ENCODE measurements at regions of chr17 and their contacts with region 1.

Region 1: DNA sequence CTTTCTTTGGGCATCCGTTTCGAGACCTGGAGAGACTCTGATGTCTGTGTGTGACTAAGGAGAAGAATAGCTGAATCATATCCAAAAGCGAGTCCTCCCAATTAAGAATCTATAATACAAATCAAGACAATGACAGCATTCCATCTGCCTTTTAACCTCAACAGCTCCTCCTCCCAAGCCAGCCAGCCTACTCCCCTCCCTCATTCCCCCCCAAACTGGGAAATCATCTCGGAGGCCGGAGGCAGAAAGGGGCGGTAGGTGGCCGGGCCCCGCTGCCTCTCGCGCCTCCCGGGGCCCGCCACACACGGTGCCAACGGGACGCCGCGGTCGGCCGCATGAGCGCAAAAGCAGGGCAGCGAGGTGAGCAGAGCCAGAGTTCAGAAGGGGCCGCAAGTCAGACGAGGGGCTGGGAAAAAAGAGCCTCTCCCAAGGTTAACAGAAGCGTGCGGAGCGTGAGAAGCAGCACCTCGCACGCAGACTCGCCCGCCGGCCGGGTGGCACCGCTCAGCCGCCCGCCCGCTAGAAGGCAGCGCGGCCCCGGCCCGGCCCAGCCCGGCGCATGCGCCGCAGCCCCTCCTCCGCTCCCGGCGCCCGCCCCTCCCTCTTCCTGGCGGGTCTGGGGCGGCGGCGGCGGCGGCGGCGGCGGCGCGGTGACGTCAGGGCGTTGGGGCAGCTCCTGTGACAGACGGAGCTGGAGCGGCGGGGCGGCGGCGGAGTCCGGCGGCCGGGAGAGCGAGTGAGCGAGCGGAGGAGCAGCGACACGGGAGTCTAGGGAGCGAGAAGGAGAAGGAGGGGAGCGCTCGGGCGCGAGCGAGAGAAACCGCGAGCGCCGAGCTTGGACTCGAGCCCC is at the start of gene PAFAH1B1:
- DNase-seq: peak; percentile 84 to 91
- ATAC-seq: peak; percentile 83 to 86
- H3K4me3 ChIP-seq: peak within 1 kb of the TSS; percentile 91 to 99 (median 97)
- H3K27ac ChIP-seq: peak within 1 kb of the TSS; percentile 97 to 100 (median 98)
- H3K4me1 ChIP-seq: peaks cover 26 to 36% of the 10 kb centered on the region in 2 donors
- H3K27me3 ChIP-seq: no peaks in the 10 kb centered on the region
- CTCF ChIP-seq: peak in 3 of 5 experiments; percentile 30 to 49 (median 46)
- POLR2A ChIP-seq: peak; percentile 95 to 96
- total RNA-seq, gene PAFAH1B1: 99.2 to 106 (median 105) TPM

Region 2: DNA sequence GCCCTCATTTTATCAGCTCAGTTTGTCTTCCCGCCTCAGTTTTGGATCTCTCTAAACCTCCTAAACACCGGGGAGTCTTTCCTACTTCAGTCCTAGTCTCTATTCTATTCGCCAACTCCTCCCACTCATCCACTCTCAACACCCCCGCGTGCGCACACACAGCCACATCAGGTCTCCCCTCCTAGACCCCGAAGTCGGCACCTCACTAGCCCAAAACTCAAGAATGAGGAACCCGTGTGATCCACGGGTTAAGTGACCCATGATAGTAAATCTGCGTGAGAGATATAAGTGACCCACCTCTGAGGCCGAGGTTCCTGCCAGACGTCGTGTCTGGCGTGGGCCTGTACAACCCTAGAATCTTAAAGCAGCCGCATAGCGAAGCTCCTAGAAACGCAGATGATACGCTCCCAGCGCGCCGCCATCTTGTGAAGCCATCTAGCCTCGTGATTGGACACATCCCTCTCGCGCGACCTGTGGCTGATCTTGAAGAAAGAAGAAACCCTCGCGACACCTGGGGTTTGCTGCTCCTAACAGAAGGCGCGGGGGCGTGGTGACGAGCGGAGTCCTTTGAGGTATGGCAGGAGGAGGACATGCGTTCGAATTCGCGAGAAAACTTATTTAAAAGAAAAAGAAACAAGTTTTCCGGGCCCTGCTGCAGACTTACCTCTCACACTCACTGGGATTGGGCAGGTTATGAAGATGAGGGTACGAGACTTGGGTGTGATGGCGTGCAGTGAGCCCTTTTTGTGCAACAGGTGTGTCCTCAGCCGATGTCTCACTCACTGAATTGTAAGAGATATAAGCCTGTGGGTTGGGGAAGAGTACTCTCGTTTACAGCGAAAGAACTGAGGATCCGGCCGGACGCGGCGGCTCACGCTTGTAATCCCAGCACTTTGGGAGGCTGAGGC is 81.5 kb before region 1 on chr17 and contains the start of gene METTL16:
- in situ Hi-C with region 1: no loop called
- intact Hi-C with region 1: loop called (anchors 1 kb)
- DNase-seq: peak; percentile 95 to 96
- ATAC-seq: peak; percentile 100
- H3K4me3 ChIP-seq: peak within 1 kb of the TSS; percentile 66 to 81 (median 74)
- H3K27ac ChIP-seq: peak within 1 kb of the TSS; percentile 86 to 88 (median 88)
- H3K4me1 ChIP-seq: peaks cover 18 to 26% of the 10 kb centered on the region in 2 donors
- H3K27me3 ChIP-seq: no peaks in the 10 kb centered on the region
- CTCF ChIP-seq: no peak
- POLR2A ChIP-seq: peak; percentile 59 to 68
- total RNA-seq, gene METTL16: 18.2 to 59.7 (median 25.4) TPM

Region 3: DNA sequence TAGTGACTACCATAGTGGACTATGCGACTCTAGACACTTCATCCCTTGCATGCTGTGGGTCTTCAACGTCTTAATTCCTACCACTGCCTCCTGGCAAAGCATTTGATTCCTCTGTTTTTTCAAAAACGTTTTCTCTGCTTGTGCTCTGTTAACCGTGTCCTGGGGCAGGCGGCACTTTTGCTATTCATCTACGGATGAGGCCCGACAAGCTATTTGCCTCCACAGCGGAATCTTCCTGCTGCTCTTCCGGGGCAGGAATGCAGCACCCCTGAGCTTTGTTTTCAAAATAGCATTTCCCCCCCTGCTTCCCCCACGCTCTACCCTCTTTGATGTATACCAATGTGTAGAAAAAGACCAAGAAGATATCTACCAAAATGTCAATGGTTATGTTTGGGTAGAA is 41.7 kb before region 1 on chr17:
- in situ Hi-C with region 1: no loop called
- intact Hi-C with region 1: no loop called
- DNase-seq: no peak
- ATAC-seq: no peak
- H3K4me3 ChIP-seq: no peak overlapping the region
- H3K27ac ChIP-seq: no peak overlapping the region
- H3K4me1 ChIP-seq: no peaks in the 10 kb centered on the region
- H3K27me3 ChIP-seq: peaks cover 7 to 15% (median 8%) of the 10 kb centered on the region in 3 donors
- CTCF ChIP-seq: no peak
- POLR2A ChIP-seq: no peak

Region 4: DNA sequence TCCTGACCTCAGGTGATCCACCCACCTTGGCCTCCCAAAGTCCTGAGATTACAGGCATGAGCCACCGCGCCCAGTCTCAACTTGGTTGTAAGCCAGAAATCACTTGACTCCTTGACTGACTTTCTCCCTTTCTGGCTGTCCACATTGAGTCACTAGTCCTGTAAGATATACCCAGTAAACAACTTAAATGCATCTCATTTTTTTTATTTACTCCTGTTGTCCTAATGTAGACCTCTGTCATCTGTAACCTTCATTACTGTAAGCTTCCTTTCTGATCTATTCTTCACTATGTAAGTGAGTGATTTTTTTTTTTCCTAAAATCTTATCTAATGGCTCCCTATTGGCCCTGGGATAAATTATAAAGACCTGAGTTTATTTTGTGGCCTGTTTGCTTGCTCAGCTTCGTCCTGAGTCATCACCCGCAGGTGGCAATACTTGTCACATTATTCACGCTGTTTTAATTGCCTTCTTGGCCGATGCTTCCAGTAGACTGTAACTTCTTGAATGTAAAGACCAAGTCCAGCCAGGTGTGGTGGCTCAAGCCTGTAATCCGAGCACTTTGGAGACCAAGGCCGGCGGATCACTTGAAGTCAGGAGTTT is 41.3 kb after region 1 on chr17:
- in situ Hi-C with region 1: no loop called
- intact Hi-C with region 1: loop called (anchors 1 kb)
- DNase-seq: peak; percentile 83 to 90
- ATAC-seq: peak; percentile 90
- H3K4me3 ChIP-seq: no peak overlapping the region
- H3K27ac ChIP-seq: peak overlapping the region; percentile 79 to 93 (median 92)
- H3K4me1 ChIP-seq: peaks cover 61 to 76% of the 10 kb centered on the region in 2 donors
- H3K27me3 ChIP-seq: no peaks in the 10 kb centered on the region
- CTCF ChIP-seq: no peak
- POLR2A ChIP-seq: no peak

Region 5: DNA sequence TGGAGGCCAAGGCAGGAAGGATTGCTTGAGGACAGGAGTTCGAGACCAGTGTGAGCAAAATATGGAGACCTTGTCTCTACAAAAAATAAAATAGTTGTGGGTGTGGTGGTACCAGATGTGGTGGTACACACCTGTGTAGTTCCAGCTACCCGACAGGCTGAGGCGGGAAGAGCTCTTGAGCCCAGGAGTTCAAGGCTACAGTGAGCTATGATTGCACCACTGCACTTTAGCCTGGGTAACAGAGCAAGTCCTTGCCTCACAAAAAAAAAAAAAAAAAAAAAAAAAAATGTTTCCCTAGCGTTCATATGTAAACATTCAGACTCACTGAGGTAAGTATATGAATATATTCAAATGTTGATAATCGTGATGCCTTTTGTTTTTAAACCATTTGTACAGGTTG is 78.8 kb after region 1 on chr17:
- in situ Hi-C with region 1: loop called in 1 of 4 experiments (anchors 10 kb)
- intact Hi-C with region 1: no loop called
- DNase-seq: no peak
- ATAC-seq: no peak
- H3K4me3 ChIP-seq: no peak overlapping the region
- H3K27ac ChIP-seq: no peak overlapping the region
- H3K4me1 ChIP-seq: no peaks in the 10 kb centered on the region
- H3K27me3 ChIP-seq: no peaks in the 10 kb centered on the region
- CTCF ChIP-seq: no peak
- POLR2A ChIP-seq: no peak

Region 6: GRCh38 chr17:2688351-2689342 is 95.5 kb after region 1 on chr17:
- in situ Hi-C with region 1: no loop called
- intact Hi-C with region 1: loop called (anchors 5 kb)
- DNase-seq: peak; percentile 86 to 88
- ATAC-seq: peak; percentile 64 to 73
- H3K4me3 ChIP-seq: no peak overlapping the region
- H3K27ac ChIP-seq: peak overlapping the region; percentile 82 to 94 (median 90)
- H3K4me1 ChIP-seq: peaks cover 38 to 41% of the 10 kb centered on the region in 2 donors
- H3K27me3 ChIP-seq: no peaks in the 10 kb centered on the region
- CTCF ChIP-seq: no peak
- POLR2A ChIP-seq: peak in 1 of 2 donors; percentile 50